ENCODE measurements at regions of chr7 and their contacts with region 1.

Region 1: DNA sequence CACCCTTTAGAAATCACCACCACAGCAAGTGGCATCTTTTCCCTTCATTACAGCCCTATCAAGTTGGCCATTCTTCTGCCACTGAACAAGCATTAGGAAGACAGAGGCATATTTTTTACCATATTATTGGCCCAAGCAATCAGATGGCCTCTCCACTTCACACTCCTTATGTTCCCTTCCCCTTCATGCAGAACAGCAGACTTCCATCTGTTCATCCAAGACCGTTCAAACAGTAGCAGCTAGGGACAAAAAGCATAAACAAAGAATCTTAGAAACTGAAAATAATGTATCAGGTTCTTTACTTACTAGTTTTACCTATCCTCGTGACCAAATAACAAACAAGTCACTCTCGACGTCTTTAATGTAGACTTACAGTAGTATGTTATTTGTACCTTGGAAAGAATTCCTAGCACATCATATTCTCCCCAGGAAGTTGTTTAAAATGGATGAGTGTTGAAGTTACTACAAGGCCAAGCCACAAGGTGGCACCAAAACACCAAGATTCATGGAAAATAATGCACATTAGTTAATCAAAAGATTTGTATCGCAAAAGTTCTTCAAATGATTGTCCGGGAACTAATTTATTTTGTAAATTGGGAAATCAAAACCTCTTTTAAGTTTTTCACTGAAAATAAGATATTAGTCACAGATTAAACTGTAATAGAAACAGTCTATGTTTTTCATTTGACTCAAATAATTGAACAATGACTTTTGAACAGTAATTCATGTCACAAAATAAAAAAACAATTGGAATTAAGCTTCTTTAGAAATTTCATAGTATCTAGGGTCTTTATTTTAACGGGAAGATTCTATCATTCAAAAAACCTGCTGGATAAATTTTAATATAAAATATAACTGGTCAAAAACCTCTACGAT is 112.1 kb downstream of the VPS41 start:
- DNase-seq: peak; percentile 46
- ATAC-seq: no peak
- H3K4me3 ChIP-seq: no peak overlapping the region
- H3K27ac ChIP-seq: no peak overlapping the region
- H3K4me1 ChIP-seq: no peaks in the 10 kb centered on the region
- H3K27me3 ChIP-seq: no peaks in the 10 kb centered on the region
- CTCF ChIP-seq: peak; percentile 72
- EP300 ChIP-seq: no peak
- POLR2A ChIP-seq: no peak
- RAD21 ChIP-seq: peak; percentile 52; the same call in 1 of the 2 replicates

Region 2: GRCh38 chr7:38817526-38817925 is 20.7 kb after region 1 on chr7:
- CTCF ChIA-PET with region 1: no interaction called
- POLR2A ChIA-PET with region 1: no interaction called
- in situ Hi-C with region 1: no loop called
- intact Hi-C with region 1: no loop called
- DNase-seq: no peak
- ATAC-seq: no peak
- H3K4me3 ChIP-seq: no peak overlapping the region
- H3K27ac ChIP-seq: no peak overlapping the region
- H3K4me1 ChIP-seq: no peaks in the 10 kb centered on the region
- H3K27me3 ChIP-seq: no peaks in the 10 kb centered on the region
- CTCF ChIP-seq: no peak
- EP300 ChIP-seq: no peak
- POLR2A ChIP-seq: no peak
- RAD21 ChIP-seq: no peak

Region 3: DNA sequence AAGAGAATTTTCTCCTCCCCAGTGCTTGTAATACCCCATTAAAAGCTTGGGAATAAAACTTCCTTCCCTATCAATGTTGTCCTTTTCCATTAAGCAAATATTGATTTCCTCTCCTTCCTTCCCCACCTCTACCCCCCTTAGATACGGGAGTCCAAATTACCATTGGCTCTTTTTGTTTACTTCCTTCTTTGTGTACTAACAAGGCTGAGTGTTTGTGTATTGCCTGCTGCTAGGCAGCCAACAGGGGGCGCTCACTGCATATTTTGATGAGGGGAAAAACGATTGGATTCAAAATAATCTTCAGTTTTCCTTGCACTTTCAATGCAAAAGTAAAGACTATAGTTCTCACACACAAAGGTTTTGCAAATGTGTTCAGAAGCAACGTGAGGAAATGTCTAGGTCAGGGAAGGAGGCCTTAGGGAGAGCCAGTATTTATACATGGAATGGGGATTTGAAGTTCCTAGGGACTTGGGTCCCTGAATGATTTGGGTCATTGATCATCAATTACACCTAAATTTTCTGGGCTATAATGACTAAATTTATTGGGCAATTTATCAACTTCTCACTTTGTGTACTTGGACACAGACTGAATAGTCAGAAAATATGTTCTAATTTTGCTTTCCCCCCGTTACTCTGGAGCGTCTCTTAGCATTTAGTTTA is 135.8 kb after region 1 on chr7:
- CTCF ChIA-PET with region 1: no interaction called
- POLR2A ChIA-PET with region 1: no interaction called
- in situ Hi-C with region 1: no loop called
- intact Hi-C with region 1: loop called (anchors 2 kb)
- DNase-seq: peak; percentile 28
- ATAC-seq: peak; percentile 54; the same call in 2 of the 3 replicates
- H3K4me3 ChIP-seq: no peak overlapping the region
- H3K27ac ChIP-seq: no peak overlapping the region
- H3K4me1 ChIP-seq: no peaks in the 10 kb centered on the region
- H3K27me3 ChIP-seq: no peaks in the 10 kb centered on the region
- CTCF ChIP-seq: peak; percentile 75
- EP300 ChIP-seq: no peak
- POLR2A ChIP-seq: no peak
- RAD21 ChIP-seq: 0 out of 2 replicates have a peak, but pooled peaks have one; percentile 28